Activated CD4-positive, alpha-beta T cell treated with anti-CD3 and anti-CD28 coated beads for 36 hours (primary cell): ENCODE measurements at regions of chr3 and their contacts with region 1.

Region 1: DNA sequence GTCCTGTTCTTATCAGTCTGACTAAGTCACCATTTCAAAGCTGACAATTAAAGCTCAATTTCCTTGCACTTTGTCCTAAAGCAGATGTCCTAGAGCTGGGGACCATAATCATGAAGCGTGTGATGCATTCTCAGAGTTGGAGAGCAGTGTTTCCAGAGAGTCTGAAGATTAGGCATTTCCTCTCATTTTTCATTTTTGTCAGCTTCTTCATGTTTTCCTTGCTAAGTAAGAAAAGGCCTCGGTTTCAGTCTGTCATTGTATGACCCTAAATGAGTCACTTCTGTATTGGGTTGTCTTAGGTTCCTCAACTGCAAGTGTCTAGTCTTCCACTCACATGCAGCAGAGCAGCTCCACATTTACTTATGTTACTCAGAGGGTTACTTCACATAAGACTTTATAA is 257.2 kb upstream of the TPRG1 start:
- DNase-seq: peak; percentile 42
- ATAC-seq: peak; percentile 82
- H3K4me3 Mint-ChIP-seq: no peak overlapping the region
- H3K27ac Mint-ChIP-seq: peak overlapping the region; percentile 90
- H3K4me1 Mint-ChIP-seq: peaks cover 46% of the 10 kb centered on the region
- H3K27me3 Mint-ChIP-seq: peaks cover 3% of the 10 kb centered on the region

Region 2: DNA sequence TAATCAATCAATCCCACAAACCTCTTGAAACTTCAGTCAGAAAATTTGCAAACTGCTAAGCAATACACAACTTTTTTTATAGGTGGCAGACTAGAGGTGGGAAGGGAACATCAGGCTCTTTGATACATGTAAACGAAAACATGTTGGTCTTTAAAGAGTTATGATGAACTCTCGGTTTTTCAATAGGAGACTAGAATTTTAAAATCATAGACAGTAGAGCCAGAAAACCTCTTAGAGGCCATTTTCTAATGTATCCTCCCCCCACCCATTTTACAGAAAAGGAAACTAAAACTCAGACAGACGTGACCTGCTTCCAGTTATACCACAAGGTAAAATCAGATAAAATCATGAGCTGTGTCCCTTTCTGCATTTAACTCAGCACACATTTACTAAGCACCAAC is 939.7 kb before region 1 on chr3:
- CTCF ChIA-PET with region 1: interaction called, 4 read pairs
- POLR2A ChIA-PET with region 1: no interaction called
- intact Hi-C with region 1: loop called (anchors 2 to 10 kb)
- DNase-seq: no peak
- ATAC-seq: peak; percentile 61
- H3K4me3 Mint-ChIP-seq: peak overlapping the region; percentile 57
- H3K27ac Mint-ChIP-seq: peak overlapping the region; percentile 90
- H3K4me1 Mint-ChIP-seq: peaks cover 57% of the 10 kb centered on the region
- H3K27me3 Mint-ChIP-seq: no peaks in the 10 kb centered on the region

Region 3: DNA sequence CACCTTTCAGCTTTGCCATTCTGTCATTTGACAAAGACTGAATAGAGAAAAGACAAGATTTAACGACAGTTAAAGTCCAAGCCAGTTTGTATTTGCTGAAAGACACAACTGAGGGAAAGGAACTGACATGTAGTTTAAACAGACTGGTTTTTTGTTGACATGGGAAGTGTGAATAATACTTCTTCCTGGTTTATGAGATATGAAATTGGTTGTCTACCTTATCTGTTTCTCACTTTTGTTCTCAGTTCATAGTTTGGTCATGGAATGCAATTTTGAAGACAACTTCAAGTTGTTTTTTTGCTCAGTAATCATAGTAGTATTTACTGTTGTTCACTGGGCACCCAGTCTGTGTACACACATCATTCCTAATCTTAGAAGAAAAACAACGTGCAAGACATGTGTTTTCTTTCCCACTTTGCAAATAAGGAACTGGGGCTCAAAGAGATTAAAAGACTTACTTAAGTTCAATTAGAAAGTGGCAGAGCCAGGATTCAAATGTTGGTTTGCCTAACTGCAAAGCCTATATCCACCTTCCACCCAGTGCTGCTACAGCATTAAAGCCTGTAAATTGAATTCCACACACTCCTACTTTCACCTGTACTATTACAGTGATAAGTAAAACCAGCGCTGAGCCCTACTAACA is 657.0 kb before region 1 on chr3:
- CTCF ChIA-PET with region 1: interaction called, 3 read pairs
- POLR2A ChIA-PET with region 1: no interaction called
- intact Hi-C with region 1: loop called in 1 of 2 experiments (anchors 10 kb)
- DNase-seq: no peak
- ATAC-seq: peak; percentile 12
- H3K4me3 Mint-ChIP-seq: no peak overlapping the region
- H3K27ac Mint-ChIP-seq: peak overlapping the region; percentile 62
- H3K4me1 Mint-ChIP-seq: peaks cover 46% of the 10 kb centered on the region
- H3K27me3 Mint-ChIP-seq: no peaks in the 10 kb centered on the region

Region 4: DNA sequence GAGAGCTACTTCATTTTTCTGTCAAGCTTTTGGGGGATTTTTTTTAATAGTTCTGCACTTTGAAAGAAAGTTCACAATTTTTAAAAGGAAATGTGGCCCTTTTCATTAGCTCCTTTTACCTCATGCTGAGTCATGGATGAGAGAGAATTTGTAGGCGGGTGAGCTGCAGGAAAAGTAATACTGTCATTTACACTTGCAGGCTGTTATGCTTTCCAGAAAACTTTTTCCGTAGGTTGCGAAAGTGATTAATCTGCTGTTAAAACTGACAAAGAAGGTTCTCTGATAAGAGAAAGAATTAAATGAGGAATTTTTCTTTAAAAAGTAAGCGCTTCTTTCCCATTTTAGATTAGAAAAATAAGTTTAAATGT is 330.4 kb before region 1 on chr3:
- CTCF ChIA-PET with region 1: no interaction called
- POLR2A ChIA-PET with region 1: interaction called, 5 read pairs
- intact Hi-C with region 1: loop called (anchors 10 kb)
- DNase-seq: peak; percentile 43
- ATAC-seq: peak; percentile 60
- H3K4me3 Mint-ChIP-seq: no peak overlapping the region
- H3K27ac Mint-ChIP-seq: no peak overlapping the region
- H3K4me1 Mint-ChIP-seq: peaks cover 12% of the 10 kb centered on the region
- H3K27me3 Mint-ChIP-seq: no peaks in the 10 kb centered on the region

Region 5: DNA sequence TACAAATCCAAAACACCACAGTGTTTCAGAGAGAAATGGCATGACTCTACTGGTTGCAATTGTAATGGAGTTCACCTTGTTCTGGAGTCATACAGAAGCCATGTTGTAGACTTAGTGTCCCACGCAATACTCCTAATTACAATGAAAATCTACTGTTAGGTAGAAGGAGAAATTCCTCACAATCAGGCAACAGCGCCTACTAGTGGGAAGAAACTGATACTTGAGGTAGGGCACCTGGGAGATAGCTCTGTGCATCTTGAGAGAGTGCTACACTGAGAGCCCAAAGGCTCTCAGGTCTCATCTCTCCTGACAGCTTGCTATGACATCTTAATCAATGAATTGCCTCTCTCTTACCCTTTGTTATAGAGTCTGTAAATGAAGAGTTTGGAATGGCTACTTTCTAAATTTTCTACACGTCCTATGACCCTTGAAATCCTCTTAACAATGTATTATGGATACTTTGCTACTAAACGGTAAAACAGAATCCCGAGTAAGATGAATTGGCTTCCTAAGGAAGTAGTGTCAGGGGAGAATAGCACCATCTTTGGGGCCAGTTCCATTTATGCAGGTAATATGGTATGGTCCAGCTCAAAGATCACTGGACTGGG is 165.4 kb before region 1 on chr3:
- CTCF ChIA-PET with region 1: interaction called, 4 read pairs
- POLR2A ChIA-PET with region 1: interaction called, 3 read pairs
- intact Hi-C with region 1: loop called (anchors 1 kb)
- DNase-seq: peak; percentile 59
- ATAC-seq: no peak
- H3K4me3 Mint-ChIP-seq: no peak overlapping the region
- H3K27ac Mint-ChIP-seq: no peak overlapping the region
- H3K4me1 Mint-ChIP-seq: peaks cover 30% of the 10 kb centered on the region
- H3K27me3 Mint-ChIP-seq: no peaks in the 10 kb centered on the region

Region 6: GRCh38 chr3:189132231-189132707 is 217.7 kb after region 1 on chr3:
- CTCF ChIA-PET with region 1: interaction called, 3 read pairs
- POLR2A ChIA-PET with region 1: no interaction called
- intact Hi-C with region 1: loop called in 1 of 2 experiments (anchors 1 kb)
- DNase-seq: peak; percentile 88
- ATAC-seq: peak; percentile 96
- H3K4me3 Mint-ChIP-seq: peak overlapping the region; percentile 24
- H3K27ac Mint-ChIP-seq: peak overlapping the region; percentile 58
- H3K4me1 Mint-ChIP-seq: peaks cover 21% of the 10 kb centered on the region
- H3K27me3 Mint-ChIP-seq: no peaks in the 10 kb centered on the region

Region 7: GRCh38 chr3:189588070-189588820 is 673.7 kb after region 1 on chr3:
- CTCF ChIA-PET with region 1: no interaction called
- POLR2A ChIA-PET with region 1: no interaction called
- intact Hi-C with region 1: no loop called
- DNase-seq: no peak
- ATAC-seq: no peak
- H3K4me3 Mint-ChIP-seq: no peak overlapping the region
- H3K27ac Mint-ChIP-seq: no peak overlapping the region
- H3K4me1 Mint-ChIP-seq: peaks cover 18% of the 10 kb centered on the region
- H3K27me3 Mint-ChIP-seq: no peaks in the 10 kb centered on the region